ENCODE measurements at regions of chr13 and their contacts with region 1.

Region 1: GRCh38 chr13:110412132-110412914 is 105.2 kb downstream of the COL4A2 start:
- DNase-seq: peak; percentile 90 to 91
- ATAC-seq: peak; percentile 88 to 89
- H3K4me3 ChIP-seq: no peak overlapping the region
- H3K27ac ChIP-seq: peak overlapping the region; percentile 73 to 92
- H3K4me1 ChIP-seq: peaks cover 36% of the 10 kb centered on the region
- CTCF ChIP-seq: peak; percentile 70
- EP300 ChIP-seq: peak; percentile 60 to 70; a peak in 2 of 5 replicates
- POLR2A ChIP-seq: no peak
- RAD21 ChIP-seq: peak; percentile 77 to 83

Region 2: DNA sequence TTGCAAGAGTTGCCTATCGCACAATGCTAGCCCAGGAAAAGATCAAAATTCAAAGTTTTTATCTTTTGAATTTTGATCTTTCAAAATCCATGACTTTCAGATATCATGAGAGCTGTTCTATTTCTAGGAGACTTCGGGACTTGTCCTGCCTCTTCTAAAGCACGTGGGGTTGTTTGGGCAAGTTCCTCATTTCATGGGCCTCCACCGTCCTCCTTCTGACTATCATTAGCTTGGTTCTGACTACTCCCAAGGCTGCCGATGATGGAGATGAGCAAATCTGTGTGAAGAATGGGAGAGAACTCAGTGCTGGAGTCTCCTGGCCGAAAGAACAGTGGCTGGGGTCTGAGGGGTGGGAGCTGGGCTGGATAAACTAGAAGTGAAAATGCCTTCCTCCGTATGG is 191.9 kb before region 1 on chr13:
- CTCF ChIA-PET with region 1: interaction called, 12 read pairs
- POLR2A ChIA-PET with region 1: no interaction called
- DNase-seq: no peak
- ATAC-seq: no peak
- H3K4me3 ChIP-seq: no peak overlapping the region
- H3K27ac ChIP-seq: no peak overlapping the region
- H3K4me1 ChIP-seq: peaks cover 3% of the 10 kb centered on the region; the same call in 1 of the 3 replicates
- CTCF ChIP-seq: no peak
- EP300 ChIP-seq: no peak
- POLR2A ChIP-seq: no peak
- RAD21 ChIP-seq: no peak

Region 3: GRCh38 chr13:110225609-110226562 is 186.4 kb before region 1 on chr13:
- CTCF ChIA-PET with region 1: interaction called, 12 read pairs
- POLR2A ChIA-PET with region 1: no interaction called
- DNase-seq: no peak
- ATAC-seq: no peak
- H3K4me3 ChIP-seq: no peak overlapping the region
- H3K27ac ChIP-seq: no peak overlapping the region
- H3K4me1 ChIP-seq: peaks cover 17% of the 10 kb centered on the region
- CTCF ChIP-seq: no peak
- EP300 ChIP-seq: no peak
- POLR2A ChIP-seq: no peak
- RAD21 ChIP-seq: no peak

Region 4: GRCh38 chr13:110347535-110348308 is 64.6 kb before region 1 on chr13:
- CTCF ChIA-PET with region 1: interaction called, 14 read pairs
- POLR2A ChIA-PET with region 1: no interaction called
- DNase-seq: peak; percentile 53 to 84
- ATAC-seq: peak; percentile 81 to 86
- H3K4me3 ChIP-seq: no peak overlapping the region
- H3K27ac ChIP-seq: peak overlapping the region; percentile 75 to 83
- H3K4me1 ChIP-seq: peaks cover 75% of the 10 kb centered on the region
- CTCF ChIP-seq: no peak
- EP300 ChIP-seq: peak; percentile 42 to 76; a peak in 2 of 5 replicates
- POLR2A ChIP-seq: no peak
- RAD21 ChIP-seq: 0 out of 5 replicates have a peak, but pooled peaks of 1 of the 2 experiments have one; percentile 17

Region 5: GRCh38 chr13:110400786-110401533 is 11.4 kb before region 1 on chr13:
- CTCF ChIA-PET with region 1: interaction called, 10 read pairs
- POLR2A ChIA-PET with region 1: no interaction called
- DNase-seq: no peak
- ATAC-seq: no peak
- H3K4me3 ChIP-seq: no peak overlapping the region
- H3K27ac ChIP-seq: no peak overlapping the region
- H3K4me1 ChIP-seq: peaks cover 31% of the 10 kb centered on the region
- CTCF ChIP-seq: no peak
- EP300 ChIP-seq: no peak
- POLR2A ChIP-seq: no peak
- RAD21 ChIP-seq: no peak

Measured in A549 (cell line).